OCI-LY7 (cell line): ENCODE measurements at regions of chr3 and their contacts with region 1.

Region 1: GRCh38 chr3:115092220-115092791 is 54.8 kb downstream of the ZBTB20 start:
- DNase-seq: peak; percentile 51
- H3K4me3 ChIP-seq: no peak overlapping the region
- H3K27ac ChIP-seq: no peak overlapping the region
- H3K4me1 ChIP-seq: no peaks in the 10 kb centered on the region
- CTCF ChIP-seq: peak; percentile 93

Region 2: GRCh38 chr3:114709102-114709501 is 383.2 kb before region 1 on chr3:
- CTCF ChIA-PET with region 1: no interaction called
- POLR2A ChIA-PET with region 1: no interaction called
- intact Hi-C with region 1: no loop called
- DNase-seq: no peak
- H3K4me3 ChIP-seq: no peak overlapping the region
- H3K27ac ChIP-seq: no peak overlapping the region
- H3K4me1 ChIP-seq: no peaks in the 10 kb centered on the region
- CTCF ChIP-seq: no peak

Region 3: DNA sequence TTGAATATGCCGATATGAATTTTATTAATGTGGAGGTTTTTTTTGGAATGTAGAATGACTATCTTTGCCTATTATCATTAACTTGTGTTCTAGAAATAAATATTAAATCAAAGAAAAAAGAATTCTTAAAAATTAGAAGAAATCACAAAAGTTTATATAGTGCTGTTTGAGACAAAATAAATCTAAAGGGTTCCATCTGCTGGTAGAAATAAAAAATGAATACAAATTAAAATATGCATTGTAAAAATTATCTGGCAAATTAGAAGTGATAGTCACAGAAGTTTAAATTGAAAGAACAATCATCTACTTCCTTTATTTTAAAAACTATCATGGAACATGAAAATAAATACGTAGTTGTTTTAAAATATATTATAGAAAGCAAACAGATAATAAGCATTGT is 77.5 kb after region 1 on chr3:
- CTCF ChIA-PET with region 1: no interaction called
- POLR2A ChIA-PET with region 1: no interaction called
- intact Hi-C with region 1: loop called (anchors 2 kb)
- DNase-seq: no peak
- H3K4me3 ChIP-seq: no peak overlapping the region
- H3K27ac ChIP-seq: no peak overlapping the region
- H3K4me1 ChIP-seq: no peaks in the 10 kb centered on the region
- CTCF ChIP-seq: peak; percentile 66

Region 4: GRCh38 chr3:115783938-115784738 is 691.8 kb after region 1 on chr3:
- CTCF ChIA-PET with region 1: no interaction called
- POLR2A ChIA-PET with region 1: interaction called, 3 read pairs
- intact Hi-C with region 1: loop called (anchors 10 kb)
- DNase-seq: peak; percentile 84
- H3K4me3 ChIP-seq: peak overlapping the region; percentile 67
- H3K27ac ChIP-seq: peak overlapping the region; percentile 65
- H3K4me1 ChIP-seq: no peaks in the 10 kb centered on the region
- CTCF ChIP-seq: peak; percentile 90

Region 5: DNA sequence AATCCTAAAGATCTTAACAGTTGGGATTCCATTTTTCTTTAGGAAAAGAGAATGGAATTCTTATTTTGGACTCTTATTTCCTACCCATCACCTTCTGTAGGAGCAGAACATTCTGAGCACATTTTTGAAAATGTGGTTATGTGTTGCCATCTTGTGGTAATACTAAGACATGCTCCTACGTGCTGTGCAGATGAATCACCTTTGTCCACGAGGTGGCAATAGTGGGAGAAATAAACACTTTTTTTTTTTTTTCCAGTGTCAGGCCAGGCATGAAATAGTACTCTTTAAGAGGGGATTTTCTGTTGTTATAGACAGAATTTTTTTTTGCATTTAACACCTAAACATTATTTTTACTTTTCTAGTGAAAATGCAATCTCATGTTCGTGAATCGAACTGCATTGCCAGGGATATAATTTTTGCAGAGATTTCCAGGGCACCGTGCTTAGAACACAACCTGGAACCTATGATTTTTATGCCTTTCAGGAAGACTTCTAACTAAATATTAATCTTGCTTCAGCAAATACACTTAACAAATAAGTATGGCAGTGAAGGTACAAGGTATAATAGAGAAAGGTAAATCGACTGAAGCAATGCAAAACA is 727.6 kb after region 1 on chr3:
- CTCF ChIA-PET with region 1: no interaction called
- POLR2A ChIA-PET with region 1: no interaction called
- intact Hi-C with region 1: loop called (anchors 5 kb)
- DNase-seq: peak; percentile 80
- H3K4me3 ChIP-seq: no peak overlapping the region
- H3K27ac ChIP-seq: no peak overlapping the region
- H3K4me1 ChIP-seq: no peaks in the 10 kb centered on the region
- CTCF ChIP-seq: peak; percentile 100